Activated CD4-positive, alpha-beta memory T cell treated with anti-CD3 and anti-CD28 coated beads for 36 hours (primary cell): ENCODE measurements at regions of chr16 and their contacts with region 1.

Region 1: GRCh38 chr16:84617791-84618580 is at the start of gene COTL1:
- DNase-seq: peak; percentile 96
- H3K4me3 Mint-ChIP-seq: peak within 1 kb of the TSS; percentile 93
- H3K27ac Mint-ChIP-seq: peak within 1 kb of the TSS; percentile 86
- H3K4me1 Mint-ChIP-seq: peaks cover 40% of the 10 kb centered on the region
- H3K27me3 Mint-ChIP-seq: no peaks in the 10 kb centered on the region
- total RNA-seq, gene COTL1: 358 to 364 TPM

Region 2: GRCh38 chr16:84504420-84505248 is 113.4 kb before region 1 on chr16 and contains the start of gene MEAK7:
- CTCF ChIA-PET with region 1: interaction called, 247 read pairs
- POLR2A ChIA-PET with region 1: interaction called, 15 read pairs
- intact Hi-C with region 1: loop called (anchors 2 kb)
- DNase-seq: peak; percentile 99
- H3K4me3 Mint-ChIP-seq: peak within 1 kb of the TSS; percentile 86
- H3K27ac Mint-ChIP-seq: peak within 1 kb of the TSS; percentile 87
- H3K4me1 Mint-ChIP-seq: peaks cover 51% of the 10 kb centered on the region
- H3K27me3 Mint-ChIP-seq: no peaks in the 10 kb centered on the region
- total RNA-seq, gene MEAK7: 12.9 to 13.6 TPM

Region 3: GRCh38 chr16:84548971-84549844 is 68.8 kb before region 1 on chr16:
- CTCF ChIA-PET with region 1: interaction called, 13 read pairs
- POLR2A ChIA-PET with region 1: interaction called, 7 read pairs
- intact Hi-C with region 1: loop called (anchors 1 kb)
- DNase-seq: peak; percentile 68
- H3K4me3 Mint-ChIP-seq: peak overlapping the region; percentile 86
- H3K27ac Mint-ChIP-seq: peak overlapping the region; percentile 98
- H3K4me1 Mint-ChIP-seq: peaks cover 65% of the 10 kb centered on the region
- H3K27me3 Mint-ChIP-seq: no peaks in the 10 kb centered on the region

Region 4: GRCh38 chr16:84592718-84593117 is 25.3 kb before region 1 on chr16:
- CTCF ChIA-PET with region 1: interaction called, 35 read pairs
- POLR2A ChIA-PET with region 1: interaction called, 6 read pairs
- intact Hi-C with region 1: no loop called
- DNase-seq: no peak
- H3K4me3 Mint-ChIP-seq: no peak overlapping the region
- H3K27ac Mint-ChIP-seq: peak overlapping the region; percentile 63
- H3K4me1 Mint-ChIP-seq: peaks cover 54% of the 10 kb centered on the region
- H3K27me3 Mint-ChIP-seq: no peaks in the 10 kb centered on the region

Region 5: DNA sequence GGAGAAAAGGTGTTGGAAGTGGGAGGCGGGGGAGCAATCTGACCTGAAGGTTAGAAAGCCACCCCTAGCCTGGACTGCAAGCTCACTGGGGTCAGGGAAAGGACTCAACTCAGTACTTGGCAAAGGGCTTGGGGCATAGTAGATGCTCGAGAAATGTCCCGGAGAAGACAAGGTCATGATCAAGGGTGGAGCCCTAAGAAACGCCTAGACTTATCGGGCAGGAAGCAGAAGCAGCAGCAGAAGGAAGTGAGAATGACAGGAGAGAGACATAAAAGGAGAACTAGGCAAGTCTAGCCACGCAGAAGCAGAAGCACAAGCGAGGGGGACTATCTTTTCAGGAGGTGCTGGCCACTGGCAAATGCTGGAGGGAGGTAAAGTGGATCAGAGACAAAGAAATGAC is 10.3 kb before region 1 on chr16:
- CTCF ChIA-PET with region 1: interaction called, 5 read pairs
- POLR2A ChIA-PET with region 1: interaction called, 54 read pairs
- intact Hi-C with region 1: loop called (anchors 1 kb)
- DNase-seq: no peak
- H3K4me3 Mint-ChIP-seq: peak overlapping the region; percentile 46
- H3K27ac Mint-ChIP-seq: peak overlapping the region; percentile 83
- H3K4me1 Mint-ChIP-seq: peaks cover 93% of the 10 kb centered on the region
- H3K27me3 Mint-ChIP-seq: no peaks in the 10 kb centered on the region

Region 6: DNA sequence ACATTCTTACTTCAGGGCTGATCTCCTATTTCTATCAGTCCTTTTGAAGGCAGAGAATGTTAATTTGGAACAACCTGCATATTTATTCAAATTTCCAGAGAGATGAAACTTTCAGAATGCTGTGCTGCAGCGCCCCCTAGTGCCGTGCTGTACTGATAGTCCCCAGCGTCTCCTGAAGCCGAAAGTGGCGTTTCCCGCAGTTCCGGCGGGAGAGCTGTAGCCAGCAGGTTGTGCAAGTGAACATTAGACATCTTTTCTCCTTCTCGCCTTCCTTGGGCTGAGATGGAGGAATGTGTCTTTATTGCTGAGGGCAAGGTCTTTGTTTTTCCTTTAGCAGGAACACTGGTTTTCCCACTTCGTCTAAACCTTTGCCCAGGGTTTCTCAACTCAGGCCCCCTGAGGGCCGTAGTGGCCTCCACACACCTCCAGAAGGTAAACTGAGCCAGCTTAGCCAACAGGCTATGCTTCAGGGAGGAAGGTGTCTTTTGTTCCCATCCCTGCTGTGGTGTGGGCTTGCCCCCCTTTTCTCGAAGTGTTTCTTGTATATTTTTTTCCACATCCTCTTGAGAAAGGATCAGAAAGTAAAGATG is 108.2 kb after region 1 on chr16:
- CTCF ChIA-PET with region 1: interaction called, 29 read pairs
- POLR2A ChIA-PET with region 1: no interaction called
- intact Hi-C with region 1: loop called (anchors 2 kb)
- DNase-seq: peak; percentile 86
- H3K4me3 Mint-ChIP-seq: no peak overlapping the region
- H3K27ac Mint-ChIP-seq: no peak overlapping the region
- H3K4me1 Mint-ChIP-seq: peaks cover 64% of the 10 kb centered on the region
- H3K27me3 Mint-ChIP-seq: no peaks in the 10 kb centered on the region

Region 7: GRCh38 chr16:84898447-84898846 is 280.5 kb after region 1 on chr16:
- CTCF ChIA-PET with region 1: no interaction called
- POLR2A ChIA-PET with region 1: no interaction called
- intact Hi-C with region 1: no loop called
- DNase-seq: peak; percentile 15
- H3K4me3 Mint-ChIP-seq: no peak overlapping the region
- H3K27ac Mint-ChIP-seq: no peak overlapping the region
- H3K4me1 Mint-ChIP-seq: peaks cover 5% of the 10 kb centered on the region
- H3K27me3 Mint-ChIP-seq: peaks cover 2% of the 10 kb centered on the region

Region 8: GRCh38 chr16:84952335-84953189 is 334.6 kb after region 1 on chr16:
- CTCF ChIA-PET with region 1: interaction called, 11 read pairs
- POLR2A ChIA-PET with region 1: no interaction called
- intact Hi-C with region 1: loop called (anchors 2 kb)
- DNase-seq: peak; percentile 79
- H3K4me3 Mint-ChIP-seq: no peak overlapping the region
- H3K27ac Mint-ChIP-seq: no peak overlapping the region
- H3K4me1 Mint-ChIP-seq: peaks cover 2% of the 10 kb centered on the region
- H3K27me3 Mint-ChIP-seq: no peaks in the 10 kb centered on the region